Mammary epithelial cell (primary cell): ENCODE measurements at regions of chr1 and their contacts with region 1.

Region 1: GRCh38 chr1:237864338-237865244 is 26.1 kb downstream of the ZP4 start:
- DNase-seq: peak; percentile 31
- H3K4me3 ChIP-seq: peak overlapping the region in 1 of 3 experiments; percentile 16
- H3K27ac ChIP-seq: no peak overlapping the region
- H3K4me1 ChIP-seq: peaks cover 6% of the 10 kb centered on the region
- H3K27me3 ChIP-seq: no peaks in the 10 kb centered on the region
- CTCF ChIP-seq: peak; percentile 91 to 100

Region 2: GRCh38 chr1:237938553-237938952 is 74.0 kb after region 1 on chr1:
- CTCF ChIA-PET with region 1: no interaction called
- dilution Hi-C with region 1: no loop called
- in situ Hi-C with region 1: no loop called
- intact Hi-C with region 1: loop called (anchors 1 kb)
- DNase-seq: no peak
- H3K4me3 ChIP-seq: no peak overlapping the region
- H3K27ac ChIP-seq: no peak overlapping the region
- H3K4me1 ChIP-seq: peaks cover 3% of the 10 kb centered on the region
- H3K27me3 ChIP-seq: no peaks in the 10 kb centered on the region
- CTCF ChIP-seq: peak in 1 of 2 donors; percentile 10

Region 3: GRCh38 chr1:238187575-238187949 is 323.0 kb after region 1 on chr1:
- CTCF ChIA-PET with region 1: no interaction called
- dilution Hi-C with region 1: no loop called
- in situ Hi-C with region 1: no loop called
- intact Hi-C with region 1: loop called (anchors 1 kb)
- DNase-seq: no peak
- H3K4me3 ChIP-seq: no peak overlapping the region
- H3K27ac ChIP-seq: no peak overlapping the region
- H3K4me1 ChIP-seq: no peaks in the 10 kb centered on the region
- H3K27me3 ChIP-seq: no peaks in the 10 kb centered on the region
- CTCF ChIP-seq: no peak

Region 4: GRCh38 chr1:238252033-238252802 is 387.6 kb after region 1 on chr1:
- CTCF ChIA-PET with region 1: no interaction called
- dilution Hi-C with region 1: no loop called
- in situ Hi-C with region 1: loop called in 1 of 2 experiments (anchors 25 kb)
- intact Hi-C with region 1: loop called (anchors 1 kb)
- DNase-seq: peak; percentile 58
- H3K4me3 ChIP-seq: no peak overlapping the region
- H3K27ac ChIP-seq: no peak overlapping the region
- H3K4me1 ChIP-seq: no peaks in the 10 kb centered on the region
- H3K27me3 ChIP-seq: no peaks in the 10 kb centered on the region
- CTCF ChIP-seq: peak; percentile 49 to 66

Region 5: GRCh38 chr1:239386453-239387303 is 1522.1 kb after region 1 on chr1 and contains the start of gene CHRM3:
- CTCF ChIA-PET with region 1: no interaction called
- dilution Hi-C with region 1: no loop called
- in situ Hi-C with region 1: loop called in 1 of 2 experiments (anchors 25 kb)
- intact Hi-C with region 1: no loop called
- DNase-seq: peak; percentile 61
- H3K4me3 ChIP-seq: peak within 1 kb of the TSS; percentile 13 to 47 (median 43)
- H3K27ac ChIP-seq: no peak within 1 kb of the TSS
- H3K4me1 ChIP-seq: peaks cover 19% of the 10 kb centered on the region
- H3K27me3 ChIP-seq: peaks cover 17% of the 10 kb centered on the region
- CTCF ChIP-seq: peak in 1 of 2 donors; percentile 29
- total RNA-seq, gene CHRM3: 43.7 TPM in 1 of 2 donors, not detected in the other